Mammary epithelial cell (primary cell): ENCODE measurements at regions of chr1 and their contacts with region 1.

Region 1: DNA sequence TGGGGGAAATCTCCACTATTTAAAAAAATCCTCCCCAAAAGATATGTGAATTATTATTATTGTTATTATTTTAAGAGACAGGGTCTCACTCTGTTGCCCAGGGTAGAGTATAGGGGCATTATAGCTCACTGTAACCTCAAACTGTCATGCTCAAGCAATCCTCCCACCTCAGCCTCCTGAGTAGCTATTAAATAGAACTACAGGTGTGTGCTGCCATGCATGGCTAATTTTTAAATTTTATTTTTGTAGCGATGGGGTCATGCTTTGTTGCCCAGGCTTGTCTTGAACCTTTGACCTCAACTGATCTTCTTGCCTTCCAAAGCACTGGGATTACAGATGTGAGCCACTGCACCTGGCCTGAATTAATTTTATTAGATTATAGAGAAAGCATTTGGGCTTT is 116.8 kb downstream of the RABGAP1L start:
- DNase-seq: no peak
- H3K4me3 ChIP-seq: no peak overlapping the region
- H3K27ac ChIP-seq: no peak overlapping the region
- H3K4me1 ChIP-seq: no peaks in the 10 kb centered on the region
- H3K27me3 ChIP-seq: no peaks in the 10 kb centered on the region
- CTCF ChIP-seq: no peak

Region 2: DNA sequence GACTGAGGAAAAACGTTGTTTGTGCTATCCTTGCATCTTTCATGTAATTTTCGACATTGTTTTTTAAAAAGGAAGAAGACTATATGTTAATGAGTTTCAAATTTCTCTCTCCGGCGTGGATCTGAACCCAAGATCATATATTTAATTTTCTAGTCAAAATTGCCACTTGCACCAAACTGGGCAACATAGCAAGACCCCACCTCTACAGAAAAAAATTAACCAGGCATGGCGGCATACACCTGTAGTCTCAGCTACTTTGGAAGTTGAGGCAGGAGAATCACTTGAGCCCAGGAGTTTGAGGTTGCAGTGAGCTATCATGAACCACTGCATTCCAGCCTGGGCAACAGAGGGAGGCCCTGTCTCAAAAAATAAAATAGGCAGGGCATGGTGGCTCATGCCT is 133.3 kb before region 1 on chr1:
- CTCF ChIA-PET with region 1: no interaction called
- dilution Hi-C with region 1: no loop called
- in situ Hi-C with region 1: no loop called
- intact Hi-C with region 1: no loop called
- DNase-seq: no peak
- H3K4me3 ChIP-seq: no peak overlapping the region
- H3K27ac ChIP-seq: no peak overlapping the region
- H3K4me1 ChIP-seq: no peaks in the 10 kb centered on the region
- H3K27me3 ChIP-seq: peaks cover 4% of the 10 kb centered on the region
- CTCF ChIP-seq: no peak

Region 3: GRCh38 chr1:174743654-174744561 is 467.8 kb after region 1 on chr1:
- CTCF ChIA-PET with region 1: no interaction called
- dilution Hi-C with region 1: loop called (anchors 25 kb)
- in situ Hi-C with region 1: no loop called
- intact Hi-C with region 1: no loop called
- DNase-seq: peak; percentile 28
- H3K4me3 ChIP-seq: no peak overlapping the region
- H3K27ac ChIP-seq: no peak overlapping the region
- H3K4me1 ChIP-seq: no peaks in the 10 kb centered on the region
- H3K27me3 ChIP-seq: no peaks in the 10 kb centered on the region
- CTCF ChIP-seq: peak; percentile 54 to 55